Activated CD4-positive, alpha-beta memory T cell treated with anti-CD3 and anti-CD28 coated beads for 36 hours (primary cell): ENCODE measurements at regions of chr14 and their contacts with region 1.

Region 1: DNA sequence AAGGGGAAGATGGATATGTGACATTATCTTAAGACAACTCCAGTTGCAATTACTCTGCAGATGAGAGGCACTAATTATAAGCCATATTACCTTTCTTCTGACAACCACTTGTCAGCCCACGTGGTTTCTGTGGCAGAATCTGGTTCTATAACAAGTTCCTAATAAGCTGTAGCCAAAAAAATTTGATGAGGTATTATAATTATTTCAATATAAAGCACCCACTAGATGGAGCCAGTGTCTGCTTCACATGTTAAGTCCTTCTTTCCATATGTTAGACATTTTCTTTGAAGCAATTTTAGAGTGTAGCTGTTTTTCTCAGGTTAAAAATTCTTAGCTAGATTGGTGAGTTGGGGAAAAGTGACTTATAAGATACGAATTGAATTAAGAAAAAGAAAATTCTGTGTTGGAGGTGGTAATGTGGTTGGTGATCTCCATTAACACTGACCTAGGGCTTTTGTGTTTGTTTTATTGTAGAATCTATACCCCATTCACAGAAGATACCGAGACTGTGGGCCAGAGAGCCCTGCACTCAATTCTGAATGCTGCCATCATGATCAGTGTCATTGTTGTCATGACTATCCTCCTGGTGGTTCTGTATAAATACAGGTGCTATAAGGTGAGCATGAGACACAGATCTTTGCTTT is 36.9 kb downstream of the PSEN1 start:
- DNase-seq: no peak
- H3K4me3 Mint-ChIP-seq: no peak overlapping the region
- H3K27ac Mint-ChIP-seq: no peak overlapping the region
- H3K4me1 Mint-ChIP-seq: no peaks in the 10 kb centered on the region
- H3K27me3 Mint-ChIP-seq: no peaks in the 10 kb centered on the region

Region 2: DNA sequence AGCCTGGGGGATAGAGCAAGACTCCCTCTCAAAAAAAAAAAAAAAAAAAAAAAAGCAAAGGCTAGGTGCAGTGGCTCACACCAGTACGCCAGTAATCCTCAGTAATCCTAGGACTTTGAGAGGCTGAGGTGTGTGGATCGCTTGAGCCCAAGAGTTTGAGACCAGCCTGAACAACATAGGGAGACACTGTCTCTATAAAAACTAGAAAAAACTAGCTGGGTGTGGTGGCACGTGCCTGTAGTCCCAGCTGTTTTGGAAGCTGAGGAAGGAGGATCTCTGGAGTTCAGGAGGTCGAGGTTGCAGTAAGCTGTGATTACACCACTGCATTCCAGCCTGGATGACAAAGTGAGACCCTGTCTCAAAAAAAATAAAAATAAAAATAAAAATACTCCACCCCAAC is 123.8 kb before region 1 on chr14:
- CTCF ChIA-PET with region 1: no interaction called
- POLR2A ChIA-PET with region 1: no interaction called
- intact Hi-C with region 1: no loop called
- DNase-seq: no peak
- H3K4me3 Mint-ChIP-seq: no peak overlapping the region
- H3K27ac Mint-ChIP-seq: no peak overlapping the region
- H3K4me1 Mint-ChIP-seq: no peaks in the 10 kb centered on the region
- H3K27me3 Mint-ChIP-seq: no peaks in the 10 kb centered on the region

Region 3: GRCh38 chr14:73472185-73473114 is 299.2 kb after region 1 on chr14:
- CTCF ChIA-PET with region 1: interaction called, 45 read pairs
- POLR2A ChIA-PET with region 1: no interaction called
- intact Hi-C with region 1: loop called (anchors 1 kb)
- DNase-seq: no peak
- H3K4me3 Mint-ChIP-seq: no peak overlapping the region
- H3K27ac Mint-ChIP-seq: no peak overlapping the region
- H3K4me1 Mint-ChIP-seq: peaks cover 17% of the 10 kb centered on the region
- H3K27me3 Mint-ChIP-seq: no peaks in the 10 kb centered on the region